ENCODE measurements at regions of chr3 and their contacts with region 1.

Region 1: GRCh38 chr3:188262913-188263683 is 109.1 kb downstream of the LPP start:
- DNase-seq: peak; percentile 60 to 79
- ATAC-seq: peak; percentile 66
- H3K4me3 ChIP-seq: no peak overlapping the region
- H3K27ac ChIP-seq: peak overlapping the region; percentile 100
- H3K4me1 ChIP-seq: peaks cover 9 to 34% of the 10 kb centered on the region in 2 donors
- H3K27me3 ChIP-seq: no peaks in the 10 kb centered on the region

Region 2: GRCh38 chr3:188154014-188154808 is 108.9 kb before region 1 on chr3 and contains the start of gene LPP:
- intact Hi-C with region 1: loop called (anchors 5 kb)
- DNase-seq: peak; percentile 90 to 92
- ATAC-seq: peak; percentile 88
- H3K4me3 ChIP-seq: peak within 1 kb of the TSS; percentile 29 to 77
- H3K27ac ChIP-seq: peak within 1 kb of the TSS; percentile 98 to 99
- H3K4me1 ChIP-seq: peaks cover 3 to 8% of the 10 kb centered on the region in 2 donors
- H3K27me3 ChIP-seq: no peaks in the 10 kb centered on the region
- total RNA-seq, gene LPP: 995 to 2,536 TPM

Region 3: DNA sequence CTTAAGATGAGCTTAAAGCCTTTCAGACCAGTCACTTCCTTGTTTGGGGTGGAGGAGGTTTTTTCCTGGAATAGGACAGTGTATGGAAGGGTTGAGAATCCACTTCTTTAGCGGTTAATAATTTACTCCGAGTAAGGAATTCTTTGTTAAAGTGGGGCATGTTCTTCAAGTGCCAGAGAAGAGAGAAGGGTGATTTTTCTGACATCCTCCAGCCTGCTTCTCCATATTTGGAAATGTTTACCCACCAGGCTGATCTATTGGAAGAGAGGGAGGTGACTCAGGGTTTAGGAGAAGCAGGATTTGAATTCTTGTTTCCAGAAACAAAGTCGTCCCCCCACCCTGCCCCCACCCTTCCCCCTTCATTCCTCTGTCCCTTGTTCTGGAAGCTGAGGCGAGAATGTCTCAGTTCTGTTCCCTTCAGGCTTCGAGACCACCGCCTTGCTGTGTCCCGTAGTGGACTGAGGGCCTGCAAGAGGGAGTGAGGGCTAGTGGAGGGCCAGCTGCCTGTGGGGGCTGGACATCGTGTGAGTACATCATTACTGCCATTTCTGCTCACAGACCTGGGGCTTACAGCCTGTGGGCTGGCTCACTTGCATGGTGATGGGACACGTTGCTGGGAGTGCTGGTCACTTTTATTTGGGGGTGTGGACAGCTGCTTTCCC is 50.7 kb before region 1 on chr3:
- intact Hi-C with region 1: loop called (anchors 1 to 5 kb)
- DNase-seq: peak; percentile 63 to 82
- ATAC-seq: peak; percentile 64
- H3K4me3 ChIP-seq: peak overlapping the region; percentile 79 to 99
- H3K27ac ChIP-seq: peak overlapping the region; percentile 100
- H3K4me1 ChIP-seq: peaks cover 8 to 15% of the 10 kb centered on the region in 2 donors
- H3K27me3 ChIP-seq: no peaks in the 10 kb centered on the region

Region 4: DNA sequence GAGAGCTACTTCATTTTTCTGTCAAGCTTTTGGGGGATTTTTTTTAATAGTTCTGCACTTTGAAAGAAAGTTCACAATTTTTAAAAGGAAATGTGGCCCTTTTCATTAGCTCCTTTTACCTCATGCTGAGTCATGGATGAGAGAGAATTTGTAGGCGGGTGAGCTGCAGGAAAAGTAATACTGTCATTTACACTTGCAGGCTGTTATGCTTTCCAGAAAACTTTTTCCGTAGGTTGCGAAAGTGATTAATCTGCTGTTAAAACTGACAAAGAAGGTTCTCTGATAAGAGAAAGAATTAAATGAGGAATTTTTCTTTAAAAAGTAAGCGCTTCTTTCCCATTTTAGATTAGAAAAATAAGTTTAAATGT is 321.0 kb after region 1 on chr3:
- intact Hi-C with region 1: loop called in 1 of 2 experiments (anchors 10 kb)
- DNase-seq: no peak
- ATAC-seq: peak; percentile 69
- H3K4me3 ChIP-seq: no peak overlapping the region
- H3K27ac ChIP-seq: peak overlapping the region in 1 of 2 donors; percentile 80
- H3K4me1 ChIP-seq: peaks cover 4 to 6% of the 10 kb centered on the region in 2 donors
- H3K27me3 ChIP-seq: no peaks in the 10 kb centered on the region

Region 5: DNA sequence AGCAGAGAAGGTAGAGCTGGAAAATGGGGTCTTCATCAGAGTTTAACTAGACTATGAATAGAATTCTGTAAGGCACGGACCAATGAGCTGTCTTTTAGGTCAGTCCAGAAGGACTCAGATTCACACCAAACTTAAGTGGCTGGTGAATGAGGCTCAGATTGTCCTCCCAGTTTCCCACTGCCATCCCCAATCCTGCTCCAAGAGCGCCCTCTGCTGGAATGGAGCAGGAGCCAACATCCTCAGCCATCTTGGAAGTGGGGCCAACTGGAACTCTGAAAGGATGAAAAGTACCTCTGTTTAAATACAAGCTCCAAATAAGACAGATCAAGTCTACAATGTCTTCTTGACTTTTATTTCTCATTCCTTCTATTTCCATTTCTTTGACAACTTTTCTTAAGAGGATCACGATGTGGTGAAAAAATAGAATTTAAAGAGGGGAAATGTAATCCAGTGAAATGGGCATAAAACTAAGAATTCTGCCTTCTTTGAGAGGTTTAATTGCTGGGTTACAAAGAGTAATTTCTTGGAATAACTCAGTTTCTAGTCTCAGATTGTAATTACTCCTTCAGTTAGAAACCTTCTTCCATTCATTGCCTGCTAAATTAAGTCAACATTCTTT is 691.6 kb after region 1 on chr3:
- intact Hi-C with region 1: loop called in 1 of 2 experiments (anchors 5 kb)
- DNase-seq: peak; percentile 87 to 92
- ATAC-seq: peak; percentile 88
- H3K4me3 ChIP-seq: no peak overlapping the region
- H3K27ac ChIP-seq: no peak overlapping the region
- H3K4me1 ChIP-seq: peaks cover 7 to 10% of the 10 kb centered on the region in 2 donors
- H3K27me3 ChIP-seq: no peaks in the 10 kb centered on the region